Keratinocyte (primary cell): ENCODE measurements at regions of chr19 and their contacts with region 1.

Region 1: DNA sequence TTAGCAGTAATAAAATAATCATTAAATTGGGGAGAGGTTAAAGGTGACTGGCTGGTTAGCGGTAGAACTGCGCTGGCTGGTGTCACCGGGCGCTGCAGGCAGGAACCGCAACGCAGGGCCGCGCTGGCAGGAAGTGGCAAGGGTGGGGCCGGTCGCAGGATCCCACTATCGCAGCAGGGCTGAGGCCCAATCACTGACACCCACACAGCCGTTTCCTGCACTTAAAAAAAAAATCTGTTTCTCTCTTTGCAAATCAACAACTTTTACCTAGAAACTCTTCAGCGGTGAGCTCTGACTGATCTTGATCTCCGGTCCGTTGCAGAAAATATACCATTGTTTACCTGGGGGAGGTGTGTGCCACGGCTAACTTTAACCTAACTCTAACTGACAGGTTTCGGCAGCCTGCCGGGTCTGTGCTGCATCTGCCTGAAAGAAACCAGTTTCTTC is 46.9 kb downstream of the KLF2 start:
- DNase-seq: no peak
- H3K4me3 ChIP-seq: no peak overlapping the region
- H3K27ac ChIP-seq: no peak overlapping the region
- H3K4me1 ChIP-seq: no peaks in the 10 kb centered on the region
- H3K27me3 ChIP-seq: no peaks in the 10 kb centered on the region
- CTCF ChIP-seq: no peak

Region 2: DNA sequence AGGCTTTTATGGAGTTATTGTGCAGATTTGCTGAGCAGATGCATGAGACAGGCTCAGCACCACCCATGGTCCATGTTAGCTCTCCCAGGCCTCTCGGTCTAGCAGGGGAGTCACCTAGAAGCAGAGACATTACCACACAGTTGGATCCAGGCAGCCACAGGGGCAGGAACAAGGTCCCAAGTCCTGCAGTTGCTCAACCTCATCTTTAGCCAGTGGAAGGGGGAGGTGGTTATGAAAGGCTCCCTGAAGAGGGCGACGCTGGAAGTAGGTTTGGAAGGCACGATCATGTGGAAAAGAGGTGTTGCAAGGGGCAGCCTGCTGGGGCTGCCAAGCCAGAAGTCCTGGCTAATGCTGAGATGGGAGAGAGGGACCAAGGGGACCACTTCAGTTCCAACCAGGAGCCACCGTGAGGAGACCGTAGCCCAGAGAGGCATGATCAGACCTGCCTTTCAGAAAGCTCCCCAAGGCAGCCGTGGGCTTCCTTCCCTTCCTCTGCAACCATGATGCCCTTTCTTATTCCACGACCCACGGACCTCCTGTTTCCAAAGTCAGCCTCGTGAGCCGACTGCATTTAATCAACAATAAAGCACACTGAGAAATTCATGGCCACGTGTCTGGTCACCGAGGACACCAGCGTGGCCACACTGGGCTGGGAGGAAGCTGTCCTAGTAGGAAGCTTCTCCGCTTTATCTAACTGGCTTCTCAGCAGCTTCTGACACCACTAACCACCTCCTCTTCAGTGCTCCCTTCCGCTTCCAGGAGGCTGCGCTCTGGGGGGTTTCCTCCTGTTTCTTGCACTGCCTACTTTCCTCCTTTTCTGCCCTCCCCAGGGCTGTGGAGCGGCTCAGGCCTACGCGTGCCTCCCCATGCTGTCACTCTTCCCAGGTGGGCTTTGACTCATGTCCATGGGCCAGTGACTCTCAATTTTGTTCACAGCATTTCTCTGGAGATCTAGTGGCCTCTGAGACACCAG is 171.2 kb before region 1 on chr19:
- dilution Hi-C with region 1: loop called (anchors 25 kb)
- DNase-seq: no peak
- H3K4me3 ChIP-seq: no peak overlapping the region
- H3K27ac ChIP-seq: no peak overlapping the region
- H3K4me1 ChIP-seq: peaks cover 24% of the 10 kb centered on the region
- H3K27me3 ChIP-seq: no peaks in the 10 kb centered on the region
- CTCF ChIP-seq: no peak

Region 3: DNA sequence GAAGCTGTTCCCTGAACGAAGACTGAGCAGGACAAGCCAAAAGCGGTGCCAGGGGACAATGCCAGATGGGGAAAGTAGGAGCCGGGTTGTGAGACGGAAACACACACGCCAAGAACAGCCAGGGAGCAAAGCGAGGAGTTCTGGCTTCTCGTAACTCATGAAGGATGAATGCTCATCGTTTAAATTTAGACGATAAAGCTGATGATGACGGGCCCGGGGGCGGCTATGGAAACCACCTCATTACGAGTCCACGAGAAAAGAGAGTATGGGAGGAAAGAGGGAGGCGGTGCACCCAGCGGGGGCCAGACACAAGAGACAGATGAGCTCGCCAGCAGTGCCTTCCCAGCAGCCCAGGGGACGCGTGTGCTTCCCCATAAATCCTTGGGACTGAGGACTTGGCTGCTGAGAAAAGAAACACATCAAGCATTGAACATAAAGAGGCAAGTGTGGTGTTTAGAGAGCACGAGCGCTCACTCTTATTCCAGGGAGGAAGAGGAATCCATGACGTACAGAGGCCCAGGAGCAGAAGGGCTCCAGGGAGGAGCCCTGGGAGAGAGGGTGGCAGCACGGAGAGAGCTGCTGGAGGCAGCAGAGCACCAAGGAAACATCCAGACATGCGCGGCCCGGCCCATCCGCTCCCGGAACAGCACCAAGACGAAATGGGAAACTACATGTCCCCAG is 29.5 kb after region 1 on chr19:
- dilution Hi-C with region 1: no loop called
- DNase-seq: no peak
- H3K4me3 ChIP-seq: no peak overlapping the region
- H3K27ac ChIP-seq: no peak overlapping the region
- H3K4me1 ChIP-seq: no peaks in the 10 kb centered on the region
- H3K27me3 ChIP-seq: no peaks in the 10 kb centered on the region
- CTCF ChIP-seq: no peak